Spleen (tissue), 13 donors: ENCODE measurements at regions of chr7 and their contacts with region 1.

Region 1: DNA sequence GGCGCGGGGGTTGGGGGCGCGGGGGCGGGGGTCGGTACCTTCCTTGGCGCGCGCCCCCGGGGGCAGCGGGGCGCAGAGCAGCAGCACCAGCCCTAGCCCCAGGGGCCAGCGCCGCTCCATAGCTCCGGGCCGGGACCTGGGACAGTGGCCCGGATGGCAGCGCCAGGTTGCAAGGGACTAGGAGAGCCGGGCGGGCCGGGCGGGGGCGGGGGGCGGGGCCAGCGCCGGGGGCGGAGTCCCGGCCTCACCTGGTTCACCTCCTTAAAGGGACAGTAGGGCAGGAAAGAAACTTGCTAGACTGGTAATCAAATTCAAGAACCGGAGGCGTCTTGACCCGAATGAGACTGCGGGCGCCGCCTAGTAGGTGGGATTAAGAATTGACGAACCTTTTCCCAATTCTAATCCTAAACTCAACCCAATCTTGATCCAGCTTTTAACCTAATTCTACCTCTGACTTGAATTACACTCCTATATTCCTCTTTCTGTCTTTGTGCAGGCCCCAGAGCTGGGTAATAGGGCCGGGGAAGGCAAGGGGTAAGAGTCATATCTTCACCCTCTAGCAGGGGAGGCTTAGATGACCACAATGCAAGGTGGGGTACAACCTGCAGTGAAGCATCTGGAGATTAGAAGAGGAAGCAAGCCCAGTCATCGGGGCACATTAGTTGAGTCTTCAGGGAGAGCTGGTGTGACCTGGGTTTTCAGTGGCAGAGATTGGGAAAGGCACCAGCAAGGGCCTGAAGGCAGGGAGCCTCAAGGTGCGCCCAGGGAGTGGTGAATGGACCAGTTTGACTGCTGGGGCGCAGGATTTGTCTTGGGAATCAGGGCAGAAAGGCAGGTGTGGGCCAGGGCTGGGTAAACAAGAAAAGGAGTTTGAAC is at the start of gene EPHA1:
- DNase-seq: no peak
- H3K4me3 ChIP-seq: peak within 1 kb of the TSS in 7 of 8 donors; percentile 18 to 70 (median 38)
- H3K27ac ChIP-seq: peak within 1 kb of the TSS in 3 of 8 donors; percentile 13 to 77 (median 36)
- H3K4me1 ChIP-seq: peaks cover 13 to 70% (median 44%) of the 10 kb centered on the region in 6 donors
- H3K27me3 ChIP-seq: peaks cover 0 to 56% (median 0%) of the 10 kb centered on the region in 7 donors
- CTCF ChIP-seq: peak in 8 of 11 experiments; percentile 9 to 37 (median 25)
- POLR2A ChIP-seq: no peak
- total RNA-seq, gene EPHA1: 1.3 to 4.5 (median 3.8) TPM

Region 2: GRCh38 chr7:143096146-143096545 is 312.8 kb before region 1 on chr7:
- intact Hi-C with region 1: no loop called
- DNase-seq: no peak
- H3K4me3 ChIP-seq: no peak overlapping the region
- H3K27ac ChIP-seq: no peak overlapping the region
- H3K4me1 ChIP-seq: no peaks in the 10 kb centered on the region
- H3K27me3 ChIP-seq: no peaks in the 10 kb centered on the region
- CTCF ChIP-seq: no peak
- POLR2A ChIP-seq: no peak

Region 3: GRCh38 chr7:143172354-143172753 is 236.6 kb before region 1 on chr7:
- intact Hi-C with region 1: no loop called
- DNase-seq: no peak
- H3K4me3 ChIP-seq: no peak overlapping the region
- H3K27ac ChIP-seq: no peak overlapping the region
- H3K4me1 ChIP-seq: no peaks in the 10 kb centered on the region
- H3K27me3 ChIP-seq: no peaks in the 10 kb centered on the region
- CTCF ChIP-seq: no peak
- POLR2A ChIP-seq: no peak

Region 4: GRCh38 chr7:143318656-143319055 is 90.3 kb before region 1 on chr7:
- intact Hi-C with region 1: loop called (anchors 10 kb)
- DNase-seq: no peak
- H3K4me3 ChIP-seq: no peak overlapping the region
- H3K27ac ChIP-seq: peak overlapping the region in 1 of 8 donors; percentile 9
- H3K4me1 ChIP-seq: peaks cover 0 to 35% (median 5%) of the 10 kb centered on the region in 6 donors
- H3K27me3 ChIP-seq: no peaks in the 10 kb centered on the region
- CTCF ChIP-seq: peak in 1 of 11 experiments; percentile 22
- POLR2A ChIP-seq: no peak